H1 (cell line): ENCODE measurements at regions of chr17 and their contacts with region 1.

Region 1: DNA sequence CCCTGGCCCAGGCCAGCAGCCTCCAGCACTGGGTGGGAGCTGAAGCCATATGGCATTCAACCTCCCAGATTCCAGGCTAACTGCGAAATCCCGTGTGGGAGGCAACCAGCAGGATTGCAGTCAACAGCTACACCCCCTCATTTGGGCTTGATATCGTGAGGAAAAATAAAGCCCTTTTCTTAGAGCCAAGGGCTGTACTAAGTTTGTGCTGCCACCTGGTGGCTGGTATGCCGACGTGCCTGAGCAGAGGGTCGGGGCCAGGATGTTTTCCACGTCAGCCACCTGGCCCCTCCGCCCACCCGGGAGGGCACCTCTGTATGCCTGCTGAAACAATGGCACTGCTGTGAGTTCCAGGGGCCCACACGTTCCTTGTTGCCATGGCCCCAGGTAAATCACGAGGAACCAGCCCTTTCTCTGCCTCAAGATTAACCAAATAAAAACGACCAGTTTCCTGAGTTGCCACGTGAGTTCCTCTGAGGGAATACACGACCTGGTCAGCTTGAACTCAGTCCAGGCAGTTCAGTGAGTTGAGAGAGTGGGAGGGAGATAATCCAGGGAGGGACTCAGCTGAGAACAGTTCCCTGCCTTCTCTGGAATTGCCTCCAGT is 9.0 kb downstream of the TMEM98 start:
- DNase-seq: peak; percentile 77 to 94
- H3K4me3 ChIP-seq: peak overlapping the region in 1 of 4 experiments; percentile 30; a peak in 1 of 8 replicates
- H3K27ac ChIP-seq: peak overlapping the region; percentile 89
- H3K4me1 ChIP-seq: peaks cover 2 to 7% (median 4%) of the 10 kb centered on the region in 4 experiments; a peak in 6 of 7 replicates
- H3K27me3 ChIP-seq: no peaks in the 10 kb centered on the region
- CTCF ChIP-seq: peak; percentile 76 to 97 (median 87)
- EP300 ChIP-seq: peak in 1 of 2 experiments; percentile 90; a peak in 1 of 3 replicates
- POLR2A ChIP-seq: 0 out of 3 replicates have a peak, but pooled peaks of 1 of the 2 experiments have one; percentile 33
- RAD21 ChIP-seq: peak; percentile 65 to 80

Region 2: GRCh38 chr17:32783602-32784001 is 153.4 kb before region 1 on chr17:
- CTCF ChIA-PET with region 1: interaction called, 51 read pairs
- POLR2A ChIA-PET with region 1: no interaction called
- DNase-seq: no peak
- H3K4me3 ChIP-seq: no peak overlapping the region
- H3K27ac ChIP-seq: no peak overlapping the region
- H3K4me1 ChIP-seq: no peaks in the 10 kb centered on the region
- H3K27me3 ChIP-seq: no peaks in the 10 kb centered on the region
- CTCF ChIP-seq: peak in 2 of 3 experiments; percentile 54 to 62; a peak in 2 of 4 replicates
- EP300 ChIP-seq: no peak
- POLR2A ChIP-seq: no peak
- RAD21 ChIP-seq: peak; percentile 82 to 85

Region 3: GRCh38 chr17:32909787-32910369 is 27.1 kb before region 1 on chr17:
- CTCF ChIA-PET with region 1: interaction called, 14 read pairs
- POLR2A ChIA-PET with region 1: no interaction called
- DNase-seq: peak in 1 of 2 experiments; percentile 80
- H3K4me3 ChIP-seq: no peak overlapping the region
- H3K27ac ChIP-seq: no peak overlapping the region
- H3K4me1 ChIP-seq: peaks cover 0 to 3% (median 1%) of the 10 kb centered on the region in 4 experiments; a peak in 2 of 7 replicates
- H3K27me3 ChIP-seq: no peaks in the 10 kb centered on the region
- CTCF ChIP-seq: peak; percentile 40 to 91 (median 70)
- EP300 ChIP-seq: no peak
- POLR2A ChIP-seq: no peak
- RAD21 ChIP-seq: peak; percentile 81 to 89

Region 4: GRCh38 chr17:32954477-32954876 is 17.5 kb after region 1 on chr17:
- CTCF ChIA-PET with region 1: interaction called, 61 read pairs
- POLR2A ChIA-PET with region 1: interaction called, 5 read pairs
- DNase-seq: no peak
- H3K4me3 ChIP-seq: no peak overlapping the region
- H3K27ac ChIP-seq: no peak overlapping the region
- H3K4me1 ChIP-seq: no peaks in the 10 kb centered on the region
- H3K27me3 ChIP-seq: no peaks in the 10 kb centered on the region
- CTCF ChIP-seq: no peak
- EP300 ChIP-seq: no peak
- POLR2A ChIP-seq: no peak
- RAD21 ChIP-seq: no peak

Region 5: GRCh38 chr17:32997753-32998632 is 61.0 kb after region 1 on chr17:
- CTCF ChIA-PET with region 1: interaction called, 10 read pairs
- POLR2A ChIA-PET with region 1: no interaction called
- DNase-seq: peak; percentile 54 to 97
- H3K4me3 ChIP-seq: peak overlapping the region in 1 of 4 experiments; percentile 32; a peak in 1 of 8 replicates
- H3K27ac ChIP-seq: no peak overlapping the region
- H3K4me1 ChIP-seq: peaks cover 0 to 3% (median 0%) of the 10 kb centered on the region in 4 experiments; a peak in 2 of 7 replicates
- H3K27me3 ChIP-seq: peaks cover 0 to 5% (median 0%) of the 10 kb centered on the region in 4 experiments; a peak in 4 of 7 replicates
- CTCF ChIP-seq: peak; percentile 85 to 93 (median 85)
- EP300 ChIP-seq: no peak
- POLR2A ChIP-seq: no peak
- RAD21 ChIP-seq: peak; percentile 73 to 83